ENCODE measurements at regions of chr6 and their contacts with region 1.

Region 1: DNA sequence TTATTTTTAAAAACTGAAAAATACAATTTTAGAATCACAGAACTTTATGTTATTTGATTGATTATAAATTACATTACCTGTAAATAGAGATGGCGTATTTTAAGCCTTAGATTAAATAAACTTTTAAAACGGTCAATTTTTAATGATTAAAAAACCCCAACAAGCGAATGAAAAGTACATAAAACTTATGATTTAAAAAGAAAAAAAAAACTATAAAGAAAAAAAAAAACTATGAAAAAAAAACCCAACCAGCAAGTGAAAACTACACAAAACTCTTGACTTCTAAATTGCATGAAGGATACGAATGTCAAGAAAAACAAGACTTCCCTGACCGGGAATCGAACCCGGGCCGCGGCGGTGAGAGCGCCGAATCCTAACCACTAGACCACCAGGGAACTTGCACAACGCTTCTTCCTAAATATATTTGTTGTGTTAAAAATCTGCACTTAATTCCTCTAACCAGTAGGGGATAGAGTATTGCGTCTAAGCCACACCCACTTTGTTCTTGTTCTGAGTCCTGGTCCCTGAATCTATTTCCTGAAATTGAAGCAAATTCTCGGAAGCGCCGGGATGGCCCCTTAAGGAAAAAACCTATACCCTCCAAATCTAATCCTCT is 10.7 kb upstream of the NCOA7 start:
- DNase-seq: peak; percentile 86
- ATAC-seq: peak; percentile 82
- H3K4me3 Mint-ChIP-seq: no peak overlapping the region
- H3K27ac Mint-ChIP-seq: no peak overlapping the region
- H3K4me1 Mint-ChIP-seq: peaks cover 11% of the 10 kb centered on the region
- H3K27me3 Mint-ChIP-seq: peaks cover 22% of the 10 kb centered on the region

Region 2: DNA sequence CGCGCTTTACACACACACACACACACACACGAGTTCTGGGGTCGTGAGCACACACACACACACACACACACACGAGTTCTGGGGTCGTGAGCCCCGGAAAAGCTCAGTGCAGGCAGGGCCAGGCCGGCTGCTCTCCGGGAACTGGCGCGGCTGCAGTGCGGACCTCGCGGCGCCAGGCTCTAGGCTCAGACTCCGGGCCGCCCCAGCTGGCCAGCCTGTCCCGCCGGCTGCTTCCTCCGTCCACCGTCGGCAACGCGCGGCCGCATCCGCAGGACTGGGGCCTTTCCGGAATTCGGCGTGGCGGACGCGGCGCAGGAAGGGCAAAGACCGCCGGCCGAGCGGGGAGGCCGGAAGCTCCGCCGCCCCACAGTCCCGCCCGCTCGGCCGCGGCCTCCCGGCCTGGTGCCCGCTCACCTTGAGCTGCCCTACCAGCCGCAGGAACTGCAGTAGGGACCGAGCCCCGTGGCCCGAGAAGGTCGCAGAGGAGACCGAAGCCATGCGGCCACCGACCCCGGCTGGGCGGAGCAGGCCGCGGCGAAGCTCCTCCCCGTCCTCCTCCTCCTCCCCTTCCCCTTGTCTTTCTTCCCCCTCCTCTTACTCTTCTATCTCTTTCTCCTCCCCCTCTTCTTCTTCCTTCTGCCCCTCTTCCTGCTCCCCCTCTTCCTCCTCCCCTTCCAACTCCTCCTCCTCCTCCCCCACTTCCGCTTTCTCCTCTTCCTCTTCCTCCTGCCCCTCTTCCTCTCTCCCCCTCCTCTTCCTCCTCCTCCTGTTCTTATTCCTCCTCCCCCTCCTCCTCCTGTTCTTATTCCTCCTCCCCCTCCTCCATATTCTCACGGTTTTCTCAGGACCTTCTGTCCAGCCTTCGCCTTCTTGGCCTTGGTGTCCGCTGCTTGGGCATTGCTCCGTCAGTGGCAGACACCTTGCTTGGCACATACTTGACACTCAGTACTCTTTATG is 478.3 kb before region 1 on chr6 and contains the start of gene HDDC2:
- CTCF ChIA-PET with region 1: interaction called, 3 read pairs
- POLR2A ChIA-PET with region 1: interaction called, 16 read pairs
- DNase-seq: peak; percentile 57
- ATAC-seq: peak; percentile 81
- H3K4me3 Mint-ChIP-seq: peak within 1 kb of the TSS; percentile 89
- H3K27ac Mint-ChIP-seq: peak within 1 kb of the TSS; percentile 91
- H3K4me1 Mint-ChIP-seq: peaks cover 44% of the 10 kb centered on the region
- H3K27me3 Mint-ChIP-seq: peaks cover 21% of the 10 kb centered on the region
- total RNA-seq, gene HDDC2: 61.7 to 69.8 TPM

Region 3: DNA sequence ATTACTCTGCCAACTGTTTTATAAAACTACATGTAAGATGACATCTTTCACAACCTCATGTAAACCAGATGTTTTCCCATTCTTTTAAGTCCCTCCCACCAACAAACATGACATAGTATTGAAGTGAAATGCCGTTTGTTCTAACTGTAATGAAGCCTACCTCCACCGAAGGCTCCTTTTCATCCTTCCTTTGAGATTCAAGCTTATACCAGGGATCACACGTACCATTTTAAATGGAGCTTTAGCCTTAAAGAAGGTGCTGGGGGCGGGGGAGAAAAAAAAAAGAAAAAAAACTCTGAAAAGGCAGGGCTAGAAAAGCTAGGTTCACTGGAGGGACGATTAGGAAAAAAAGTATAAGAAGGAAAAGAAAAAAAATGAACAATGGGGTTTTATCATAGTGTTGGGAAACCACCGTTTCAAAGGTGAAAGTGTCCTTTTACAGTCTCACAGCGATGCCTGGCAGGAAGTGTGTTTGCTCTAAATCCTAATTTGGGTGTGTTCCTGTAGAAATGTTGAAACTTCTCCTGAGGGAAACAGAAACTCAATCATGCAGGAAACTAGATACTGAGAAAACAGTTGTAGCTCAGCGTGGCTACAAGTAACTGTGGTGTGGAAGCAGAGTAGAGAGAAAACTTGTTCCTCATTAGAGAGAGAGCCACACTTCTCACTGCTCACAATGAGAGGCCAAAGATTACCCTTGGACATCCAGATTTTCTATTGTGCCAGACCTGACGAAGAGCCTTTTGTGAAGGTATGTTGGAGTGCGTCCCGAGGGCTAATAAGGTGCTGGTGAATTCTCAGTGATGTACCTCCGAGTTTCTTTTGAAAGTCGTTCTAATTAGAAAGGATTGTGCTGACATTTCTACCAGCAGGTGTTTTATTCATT is 138.9 kb after region 1 on chr6:
- CTCF ChIA-PET with region 1: interaction called, 8 read pairs
- POLR2A ChIA-PET with region 1: interaction called, 10 read pairs
- DNase-seq: peak; percentile 64
- ATAC-seq: peak; percentile 93
- H3K4me3 Mint-ChIP-seq: peak overlapping the region; percentile 75
- H3K27ac Mint-ChIP-seq: peak overlapping the region; percentile 87
- H3K4me1 Mint-ChIP-seq: peaks cover 40% of the 10 kb centered on the region
- H3K27me3 Mint-ChIP-seq: no peaks in the 10 kb centered on the region

Region 4: GRCh38 chr6:125974214-125974866 is 194.3 kb after region 1 on chr6:
- CTCF ChIA-PET with region 1: interaction called, 23 read pairs
- POLR2A ChIA-PET with region 1: interaction called, 3 read pairs
- DNase-seq: no peak
- ATAC-seq: peak; percentile 81
- H3K4me3 Mint-ChIP-seq: no peak overlapping the region
- H3K27ac Mint-ChIP-seq: no peak overlapping the region
- H3K4me1 Mint-ChIP-seq: peaks cover 6% of the 10 kb centered on the region
- H3K27me3 Mint-ChIP-seq: no peaks in the 10 kb centered on the region

Region 5: GRCh38 chr6:125986300-125987025 is 206.4 kb after region 1 on chr6 and contains the start of gene TRMT11:
- CTCF ChIA-PET with region 1: interaction called, 4 read pairs
- POLR2A ChIA-PET with region 1: interaction called, 13 read pairs
- DNase-seq: peak; percentile 83
- ATAC-seq: peak; percentile 99
- H3K4me3 Mint-ChIP-seq: peak within 1 kb of the TSS; percentile 13
- H3K27ac Mint-ChIP-seq: no peak within 1 kb of the TSS
- H3K4me1 Mint-ChIP-seq: peaks cover 13% of the 10 kb centered on the region
- H3K27me3 Mint-ChIP-seq: no peaks in the 10 kb centered on the region
- total RNA-seq, gene TRMT11: 17.1 to 18.1 TPM